Dorsolateral prefrontal cortex (tissue), 120 donors: ENCODE measurements at regions of chr2 and their contacts with region 1.

Region 1: DNA sequence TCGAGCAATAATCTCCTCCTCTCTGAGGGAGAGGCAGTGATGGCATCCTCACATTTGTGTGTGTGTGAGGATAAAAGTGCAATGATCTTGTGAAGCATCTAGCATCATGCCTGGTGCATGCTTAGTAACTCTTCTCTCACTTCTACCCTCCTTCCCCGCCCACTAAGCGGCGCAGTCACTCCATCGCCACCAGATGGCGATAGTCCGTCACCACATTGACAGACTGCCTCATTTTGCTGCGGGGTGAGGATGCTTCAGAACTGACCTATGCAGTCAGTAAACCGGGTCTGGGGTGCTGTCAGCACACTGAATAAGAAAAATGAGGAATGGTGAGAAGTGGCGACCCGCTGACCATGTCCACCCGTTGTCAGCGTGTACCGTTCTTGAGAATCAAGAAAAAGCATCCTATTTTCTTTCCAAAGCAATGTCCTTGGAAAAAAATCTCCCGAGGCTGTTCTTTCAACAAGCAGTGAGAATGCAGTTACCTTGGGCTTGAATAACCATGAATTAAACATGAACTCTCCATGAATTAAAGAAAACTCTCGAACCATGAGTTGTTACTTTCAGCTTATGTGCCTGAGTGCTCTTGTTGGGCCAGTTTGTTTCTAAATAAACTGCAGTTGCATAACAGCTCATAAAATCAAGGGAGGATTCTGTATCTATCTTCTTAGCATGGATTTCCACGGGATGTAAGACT is 37.3 kb upstream of the TMEM177 start:
- DNase-seq: peak; percentile 60 to 87 (median 82)
- H3K4me3 ChIP-seq: peak overlapping the region in 41 of 59 donors; percentile 6 to 42 (median 33)
- H3K27ac ChIP-seq: peak overlapping the region in 43 of 59 donors; percentile 1 to 80 (median 52)
- H3K27me3 ChIP-seq: no peaks in the 10 kb centered on the region
- CTCF ChIP-seq: peak; percentile 60 to 99 (median 96)

Region 2: DNA sequence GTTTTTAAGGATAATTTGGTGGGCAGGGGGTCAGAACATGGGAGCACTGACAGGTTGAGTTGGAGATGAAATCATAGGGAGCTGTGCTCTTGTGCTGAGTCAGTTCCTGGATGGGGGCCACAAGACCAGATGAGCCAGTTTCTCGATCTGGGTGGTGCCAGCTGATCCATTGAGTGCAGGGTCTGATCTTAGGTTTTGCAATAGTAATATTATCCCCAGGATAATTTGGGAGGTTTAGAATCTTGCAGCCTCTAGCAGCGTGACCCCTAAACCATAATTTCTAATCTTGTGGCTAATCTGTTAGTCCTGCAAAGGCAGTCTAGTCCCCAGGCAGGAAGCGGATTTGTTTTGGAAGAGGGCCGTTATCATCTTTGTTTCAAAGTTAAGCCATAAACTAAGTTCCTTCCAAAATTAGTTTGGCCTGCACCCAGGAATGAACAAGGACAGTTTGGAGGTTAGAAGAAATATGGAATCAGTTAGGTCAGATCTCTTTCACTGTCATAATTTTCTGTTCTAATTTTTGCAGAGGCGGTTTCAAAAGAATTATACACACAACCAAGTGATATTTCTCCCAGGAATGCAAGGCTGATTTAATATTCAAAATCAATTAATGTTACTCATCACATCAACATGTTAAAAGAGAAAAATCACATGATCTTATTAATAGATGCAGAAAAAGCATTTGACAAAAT is 251.9 kb before region 1 on chr2:
- intact Hi-C with region 1: no loop called
- DNase-seq: peak in 1 of 10 donors; percentile 12
- H3K4me3 ChIP-seq: no peak overlapping the region
- H3K27ac ChIP-seq: no peak overlapping the region
- H3K27me3 ChIP-seq: no peaks in the 10 kb centered on the region
- CTCF ChIP-seq: no peak

Region 3: GRCh38 chr2:119579424-119580295 is 62.0 kb before region 1 on chr2:
- intact Hi-C with region 1: no loop called
- DNase-seq: no peak
- H3K4me3 ChIP-seq: no peak overlapping the region
- H3K27ac ChIP-seq: no peak overlapping the region
- H3K27me3 ChIP-seq: no peaks in the 10 kb centered on the region
- CTCF ChIP-seq: no peak

Region 4: GRCh38 chr2:119659601-119660342 is 18.1 kb after region 1 on chr2:
- intact Hi-C with region 1: loop called in 1 of 2 experiments (anchors 2 kb)
- DNase-seq: peak in 1 of 10 donors; percentile 51
- H3K4me3 ChIP-seq: no peak overlapping the region
- H3K27ac ChIP-seq: no peak overlapping the region
- H3K27me3 ChIP-seq: no peaks in the 10 kb centered on the region
- CTCF ChIP-seq: peak; percentile 62 to 91 (median 82)